Colonic mucosa (tissue), 4 donors: ENCODE measurements at regions of chr17 and their contacts with region 1.

Region 1: GRCh38 chr17:68057531-68057952 is 22.0 kb downstream of the KPNA2 start:
- DNase-seq: peak; percentile 46
- H3K4me3 ChIP-seq: no peak overlapping the region
- H3K27ac ChIP-seq: no peak overlapping the region
- H3K4me1 ChIP-seq: no peaks in the 10 kb centered on the region
- H3K27me3 ChIP-seq: no peaks in the 10 kb centered on the region
- CTCF ChIP-seq: peak; percentile 32

Region 2: DNA sequence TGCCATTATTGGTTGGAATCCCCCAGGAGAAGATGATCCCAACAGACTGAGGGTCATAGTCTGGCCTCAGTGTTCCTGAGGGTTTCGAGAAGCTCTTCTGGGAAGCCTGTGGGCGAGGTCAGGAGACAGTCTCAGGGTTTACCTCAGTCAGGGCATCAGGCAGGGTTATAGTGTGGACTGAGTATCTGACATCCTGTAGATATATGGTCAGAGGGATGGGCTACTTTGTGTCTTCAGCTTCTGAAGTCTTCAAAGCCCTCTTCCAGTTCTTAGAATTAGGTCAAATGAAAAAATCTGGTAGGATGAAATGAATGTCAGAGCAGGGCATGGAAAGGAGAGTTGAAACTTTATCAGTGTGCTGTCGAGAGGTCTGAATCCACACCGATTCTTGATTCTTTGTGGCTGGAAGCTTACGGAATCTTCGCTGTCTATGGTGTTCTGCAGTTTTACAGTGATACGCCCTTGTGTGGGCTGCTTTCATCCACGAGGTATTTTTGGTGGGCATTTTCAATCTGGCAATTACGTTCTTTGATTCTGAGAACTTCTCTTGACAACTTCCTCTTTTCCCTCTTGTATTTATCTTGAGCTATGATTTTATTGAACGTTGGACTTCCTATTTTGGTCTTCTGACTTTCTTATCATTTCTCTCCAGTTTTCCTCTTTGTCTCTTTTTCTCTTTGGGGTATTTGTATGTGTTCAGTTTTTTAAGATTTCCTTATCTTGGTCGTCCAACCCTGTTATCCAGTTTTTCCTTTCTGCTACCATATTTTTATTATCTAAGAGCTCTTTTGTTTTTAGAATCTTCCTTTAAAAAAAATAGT is 201.8 kb before region 1 on chr17:
- intact Hi-C with region 1: no loop called
- DNase-seq: no peak
- H3K4me3 ChIP-seq: no peak overlapping the region
- H3K27ac ChIP-seq: no peak overlapping the region
- H3K4me1 ChIP-seq: no peaks in the 10 kb centered on the region
- H3K27me3 ChIP-seq: no peaks in the 10 kb centered on the region
- CTCF ChIP-seq: no peak

Region 3: GRCh38 chr17:68124873-68125870 is 67.6 kb after region 1 on chr17:
- intact Hi-C with region 1: no loop called
- DNase-seq: no peak
- H3K4me3 ChIP-seq: no peak overlapping the region
- H3K27ac ChIP-seq: no peak overlapping the region
- H3K4me1 ChIP-seq: no peaks in the 10 kb centered on the region
- H3K27me3 ChIP-seq: no peaks in the 10 kb centered on the region
- CTCF ChIP-seq: no peak

Region 4: DNA sequence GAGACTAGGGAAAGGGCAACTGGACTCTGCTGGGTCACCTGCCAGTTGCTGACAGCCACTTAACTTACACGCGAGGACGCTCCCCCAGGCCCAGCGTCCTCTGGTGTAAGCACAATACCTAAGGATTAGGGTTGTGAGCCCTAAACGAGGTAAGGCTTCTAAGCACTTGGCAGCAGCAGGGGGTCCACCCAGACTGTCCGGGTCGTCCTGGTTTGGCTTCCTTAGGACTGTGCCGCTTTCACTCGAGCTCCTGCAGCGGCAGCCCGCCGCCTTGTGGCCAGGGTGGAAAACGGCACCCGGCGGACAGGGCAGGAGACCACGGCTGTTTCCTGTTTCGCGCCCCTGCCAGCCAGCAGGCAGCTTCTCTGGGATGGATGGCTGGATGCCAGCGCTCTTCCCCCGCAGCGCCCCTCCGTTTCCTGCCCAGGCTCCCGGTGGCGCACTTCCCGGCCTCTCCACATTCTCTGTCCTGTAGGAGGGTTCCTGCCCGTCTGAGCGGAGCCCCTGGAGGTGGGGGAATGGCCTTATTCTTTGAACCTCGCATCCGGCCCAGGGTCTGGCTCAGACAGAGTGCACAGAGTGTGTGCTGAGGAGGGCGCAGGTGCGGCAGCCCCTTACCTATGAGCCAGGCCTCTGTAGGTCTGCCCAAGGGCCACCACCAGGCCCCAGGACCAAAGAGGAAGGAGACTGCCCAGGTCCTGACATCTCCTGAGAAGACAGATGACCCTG is 143.3 kb after region 1 on chr17:
- intact Hi-C with region 1: loop called (anchors 5 kb)
- DNase-seq: peak; percentile 78
- H3K4me3 ChIP-seq: no peak overlapping the region
- H3K27ac ChIP-seq: no peak overlapping the region
- H3K4me1 ChIP-seq: peaks cover 22% of the 10 kb centered on the region
- H3K27me3 ChIP-seq: peaks cover 49% of the 10 kb centered on the region
- CTCF ChIP-seq: peak; percentile 83